CD4-positive, alpha-beta memory T cell (primary cell): ENCODE measurements at regions of chr3 and their contacts with region 1.

Region 1: GRCh38 chr3:67947808-67948508 is 293.5 kb upstream of the SUCLG2 start:
- DNase-seq: peak; percentile 75 to 86 (median 82)
- H3K4me3 ChIP-seq: peak overlapping the region; percentile 24 to 51
- H3K4me3 Mint-ChIP-seq: peak overlapping the region; percentile 81 to 95 (median 84)
- H3K27ac ChIP-seq: no peak overlapping the region
- H3K27ac Mint-ChIP-seq: peak overlapping the region; percentile 59 to 95 (median 86)
- H3K4me1 ChIP-seq: peaks cover 27% of the 10 kb centered on the region
- H3K4me1 Mint-ChIP-seq: peaks cover 21 to 46% (median 29%) of the 10 kb centered on the region in 4 donors
- H3K27me3 ChIP-seq: no peaks in the 10 kb centered on the region
- H3K27me3 Mint-ChIP-seq: no peaks in the 10 kb centered on the region

Region 2: DNA sequence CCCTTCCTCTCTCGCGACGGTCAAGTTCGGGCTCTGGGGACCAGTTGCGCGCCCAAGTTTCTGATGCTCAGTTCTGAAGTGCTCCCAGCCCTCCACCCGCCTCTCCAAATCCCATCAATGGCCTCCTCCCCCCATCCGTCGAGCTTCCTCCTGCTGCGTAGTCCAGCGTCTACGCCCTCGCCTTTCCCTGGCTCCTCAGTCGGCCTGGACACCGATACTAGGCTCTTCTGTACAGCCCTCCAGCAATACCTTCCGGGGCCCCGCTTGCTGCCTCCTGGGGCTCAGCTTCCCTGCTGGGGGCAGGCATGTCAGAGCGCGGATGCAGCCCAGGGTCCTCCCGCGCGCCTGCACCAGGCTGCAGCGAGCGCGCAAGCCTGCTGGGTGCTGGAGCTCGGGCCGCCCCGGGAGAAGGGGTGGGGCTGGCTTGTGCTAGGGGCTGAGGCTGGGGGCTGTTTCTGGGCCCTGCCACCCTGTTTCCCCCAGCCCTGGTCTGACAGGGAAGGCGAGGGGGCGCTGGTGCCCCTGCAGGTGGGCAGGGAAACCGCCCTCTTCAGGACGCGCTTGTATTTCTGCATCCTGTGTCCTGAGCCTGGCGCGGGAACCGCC is 59.8 kb after region 1 on chr3:
- CTCF ChIA-PET with region 1: interaction called, 7 read pairs
- POLR2A ChIA-PET with region 1: interaction called, 4 read pairs
- intact Hi-C with region 1: loop called (anchors 5 kb)
- DNase-seq: peak; percentile 33 to 39 (median 38)
- H3K4me3 ChIP-seq: peak overlapping the region; percentile 9 to 33
- H3K4me3 Mint-ChIP-seq: peak overlapping the region; percentile 72 to 95 (median 87)
- H3K27ac ChIP-seq: no peak overlapping the region
- H3K27ac Mint-ChIP-seq: peak overlapping the region in 3 of 7 donors; percentile 44 to 75 (median 69)
- H3K4me1 ChIP-seq: no peaks in the 10 kb centered on the region
- H3K4me1 Mint-ChIP-seq: peaks cover 9 to 28% (median 15%) of the 10 kb centered on the region in 4 donors
- H3K27me3 ChIP-seq: peaks cover 9% of the 10 kb centered on the region
- H3K27me3 Mint-ChIP-seq: peaks cover 10 to 12% of the 10 kb centered on the region in 2 donors

Region 3: GRCh38 chr3:68334367-68334986 is 386.5 kb after region 1 on chr3:
- CTCF ChIA-PET with region 1: no interaction called
- POLR2A ChIA-PET with region 1: no interaction called
- intact Hi-C with region 1: no loop called
- DNase-seq: no peak
- H3K4me3 ChIP-seq: no peak overlapping the region
- H3K4me3 Mint-ChIP-seq: no peak overlapping the region
- H3K27ac ChIP-seq: no peak overlapping the region
- H3K27ac Mint-ChIP-seq: no peak overlapping the region
- H3K4me1 ChIP-seq: no peaks in the 10 kb centered on the region
- H3K4me1 Mint-ChIP-seq: no peaks in the 10 kb centered on the region
- H3K27me3 ChIP-seq: no peaks in the 10 kb centered on the region
- H3K27me3 Mint-ChIP-seq: peaks cover 0 to 3% of the 10 kb centered on the region in 2 donors